Dorsolateral prefrontal cortex (tissue), 120 donors: ENCODE measurements at regions of chr11 and their contacts with region 1.

Region 1: GRCh38 chr11:123560006-123560405 is 94.4 kb downstream of the SCN3B start:
- DNase-seq: peak; percentile 66 to 90 (median 80)
- H3K4me3 ChIP-seq: peak overlapping the region; percentile 16 to 69 (median 54)
- H3K27ac ChIP-seq: peak overlapping the region; percentile 55 to 97 (median 90)
- H3K27me3 ChIP-seq: no peaks in the 10 kb centered on the region
- CTCF ChIP-seq: peak in 2 of 56 donors; percentile 4 to 8

Region 2: GRCh38 chr11:123511037-123511870 is 48.8 kb before region 1 on chr11:
- intact Hi-C with region 1: loop called (anchors 2 to 5 kb)
- DNase-seq: peak; percentile 83 to 98 (median 94)
- H3K4me3 ChIP-seq: peak overlapping the region in 52 of 59 donors; percentile 11 to 57 (median 38)
- H3K27ac ChIP-seq: peak overlapping the region in 56 of 59 donors; percentile 44 to 93 (median 82)
- H3K27me3 ChIP-seq: no peaks in the 10 kb centered on the region
- CTCF ChIP-seq: peak; percentile 78 to 98 (median 94)

Region 3: DNA sequence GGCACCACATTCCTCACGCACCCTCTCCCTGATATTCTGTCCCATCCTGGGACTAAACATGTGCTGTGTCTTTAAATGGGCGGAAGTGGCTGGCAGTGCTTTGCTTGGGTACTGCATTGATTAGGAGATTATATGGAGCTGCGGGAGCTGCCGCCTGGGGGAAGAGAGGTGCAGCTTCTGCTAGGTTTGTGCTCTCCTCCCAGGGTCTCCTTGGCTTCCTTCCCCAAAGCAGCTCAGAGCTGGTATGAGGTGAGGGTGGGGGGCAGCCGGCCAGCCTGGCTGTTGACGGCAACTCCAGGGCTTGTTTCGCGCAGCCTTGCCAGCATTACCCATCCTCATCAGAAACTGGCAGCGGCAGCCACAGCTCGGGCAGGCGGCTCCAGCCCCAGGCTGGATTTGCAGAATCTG is 34.5 kb before region 1 on chr11:
- intact Hi-C with region 1: loop called in 1 of 2 experiments (anchors 5 kb)
- DNase-seq: peak in 7 of 10 donors; percentile 55 to 77 (median 62)
- H3K4me3 ChIP-seq: peak overlapping the region; percentile 48 to 85 (median 69)
- H3K27ac ChIP-seq: peak overlapping the region in 58 of 59 donors; percentile 2 to 94 (median 80)
- H3K27me3 ChIP-seq: no peaks in the 10 kb centered on the region
- CTCF ChIP-seq: peak in 1 of 56 donors; percentile 26